Naive thymus-derived CD8-positive, alpha-beta T cell (primary cell): ENCODE measurements at regions of chr1 and their contacts with region 1.

Region 1: GRCh38 chr1:226940029-226940805 is at the start of gene COQ8A:
- DNase-seq: peak; percentile 92 to 100 (median 99)
- ATAC-seq: peak; percentile 91
- H3K4me3 Mint-ChIP-seq: peak within 1 kb of the TSS; percentile 87 to 96 (median 91)
- H3K27ac Mint-ChIP-seq: peak within 1 kb of the TSS; percentile 95 to 98 (median 98)
- H3K4me1 Mint-ChIP-seq: peaks cover 34 to 66% (median 59%) of the 10 kb centered on the region in 4 donors
- H3K27me3 Mint-ChIP-seq: no peaks in the 10 kb centered on the region
- polyA plus RNA-seq, gene COQ8A: 37.7 to 74.2 (median 63.8) TPM

Region 2: GRCh38 chr1:226407497-226408284 is 532.5 kb before region 1 on chr1 and contains the start of gene PARP1:
- POLR2A ChIA-PET with region 1: interaction called, 11 read pairs
- DNase-seq: peak; percentile 79 to 93 (median 88)
- ATAC-seq: peak; percentile 85 to 86
- H3K4me3 Mint-ChIP-seq: peak within 1 kb of the TSS; percentile 92 to 100 (median 97)
- H3K27ac Mint-ChIP-seq: peak within 1 kb of the TSS; percentile 87 to 98 (median 96)
- H3K4me1 Mint-ChIP-seq: peaks cover 31 to 53% (median 50%) of the 10 kb centered on the region in 4 donors
- H3K27me3 Mint-ChIP-seq: no peaks in the 10 kb centered on the region
- polyA plus RNA-seq, gene PARP1: 98.6 to 128 (median 121) TPM

Region 3: DNA sequence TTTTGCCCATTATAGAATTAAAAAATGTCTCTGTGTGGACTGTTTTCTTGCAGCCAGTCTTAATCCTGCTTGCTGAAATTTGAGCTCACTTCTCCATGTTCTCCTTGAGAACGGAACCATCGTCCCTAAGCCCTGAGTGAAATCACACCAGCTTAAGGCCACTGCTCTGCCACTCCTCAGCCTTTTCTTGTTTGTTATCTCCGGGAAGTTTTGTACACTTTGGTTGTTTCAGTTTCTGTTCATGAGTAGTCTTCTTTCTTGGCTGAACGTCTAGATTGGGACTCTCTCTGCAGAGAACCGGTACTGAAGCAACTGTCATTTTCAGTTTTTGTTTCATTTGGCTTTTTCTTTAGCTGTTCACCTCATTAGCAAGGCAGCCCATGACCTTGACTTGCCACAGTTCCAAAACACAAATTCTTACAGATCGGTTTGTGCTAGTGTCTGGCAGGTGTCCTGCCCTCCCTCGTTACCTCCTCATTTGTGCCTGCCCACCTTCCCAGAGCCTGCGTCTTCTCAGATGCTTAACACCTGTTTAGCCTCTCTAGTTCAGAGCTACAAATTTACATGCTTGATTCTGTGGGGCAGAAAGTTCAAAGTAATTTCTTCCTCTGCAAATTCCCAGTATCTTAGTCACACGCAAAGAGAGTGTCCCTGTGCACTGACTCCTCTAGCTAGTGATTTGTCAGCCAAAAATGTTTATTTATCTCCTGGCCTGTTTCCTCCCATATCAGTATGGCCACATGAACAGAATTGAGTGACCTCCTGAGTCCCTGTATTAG is 57.4 kb before region 1 on chr1:
- POLR2A ChIA-PET with region 1: interaction called, 54 read pairs
- DNase-seq: peak in 5 of 10 donors; percentile 3 to 61 (median 50)
- ATAC-seq: peak; percentile 78 to 82
- H3K4me3 Mint-ChIP-seq: peak overlapping the region; percentile 75 to 84 (median 80)
- H3K27ac Mint-ChIP-seq: peak overlapping the region; percentile 54 to 97 (median 90)
- H3K4me1 Mint-ChIP-seq: peaks cover 25 to 55% (median 50%) of the 10 kb centered on the region in 4 donors
- H3K27me3 Mint-ChIP-seq: no peaks in the 10 kb centered on the region

Region 4: GRCh38 chr1:226951286-226952117 is 11.3 kb after region 1 on chr1:
- POLR2A ChIA-PET with region 1: interaction called, 19 read pairs
- DNase-seq: no peak
- ATAC-seq: no peak
- H3K4me3 Mint-ChIP-seq: no peak overlapping the region
- H3K27ac Mint-ChIP-seq: peak overlapping the region in 4 of 10 donors; percentile 4 to 70 (median 40)
- H3K4me1 Mint-ChIP-seq: peaks cover 31 to 67% (median 57%) of the 10 kb centered on the region in 4 donors
- H3K27me3 Mint-ChIP-seq: no peaks in the 10 kb centered on the region

Region 5: GRCh38 chr1:227155688-227156087 is 215.5 kb after region 1 on chr1:
- POLR2A ChIA-PET with region 1: no interaction called
- DNase-seq: no peak
- ATAC-seq: no peak
- H3K4me3 Mint-ChIP-seq: no peak overlapping the region
- H3K27ac Mint-ChIP-seq: no peak overlapping the region
- H3K4me1 Mint-ChIP-seq: no peaks in the 10 kb centered on the region
- H3K27me3 Mint-ChIP-seq: peaks cover 0 to 4% (median 0%) of the 10 kb centered on the region in 5 donors